ENCODE measurements at regions of chr4 and their contacts with region 1.

Region 1: GRCh38 chr4:85147439-85148076 is 181.1 kb upstream of the WDFY3 start:
- DNase-seq: peak; percentile 50
- ATAC-seq: peak; percentile 53 to 76
- H3K4me3 ChIP-seq: no peak overlapping the region
- H3K27ac ChIP-seq: no peak overlapping the region
- H3K4me1 ChIP-seq: no peaks in the 10 kb centered on the region
- H3K27me3 ChIP-seq: no peaks in the 10 kb centered on the region
- CTCF ChIP-seq: peak; percentile 62

Region 2: DNA sequence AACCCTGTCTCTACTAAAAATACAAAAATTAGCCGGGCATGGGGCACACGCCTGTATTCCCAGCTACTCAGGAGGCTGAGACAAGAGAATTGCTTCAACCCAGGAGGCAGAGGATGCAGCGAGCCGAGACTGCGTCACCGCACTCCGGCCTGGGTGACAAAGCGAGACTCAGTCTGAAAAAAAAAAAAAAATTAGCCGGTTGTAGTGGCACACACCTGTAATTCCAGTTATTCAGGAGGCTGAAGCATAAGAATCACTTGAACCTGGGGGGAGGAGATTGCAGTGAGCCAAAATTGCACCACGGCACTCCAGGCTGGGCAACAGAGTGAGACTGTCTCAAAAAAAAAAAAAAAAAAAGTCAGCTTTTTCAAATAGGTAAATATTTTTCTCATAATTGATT is 252.9 kb before region 1 on chr4:
- intact Hi-C with region 1: no loop called
- DNase-seq: peak; percentile 57
- ATAC-seq: peak; percentile 92 to 93
- H3K4me3 ChIP-seq: no peak overlapping the region
- H3K27ac ChIP-seq: peak overlapping the region; percentile 32
- H3K4me1 ChIP-seq: peaks cover 14% of the 10 kb centered on the region
- H3K27me3 ChIP-seq: no peaks in the 10 kb centered on the region
- CTCF ChIP-seq: no peak

Region 3: GRCh38 chr4:84971319-84971932 is 176.1 kb before region 1 on chr4:
- intact Hi-C with region 1: no loop called
- DNase-seq: no peak
- ATAC-seq: no peak
- H3K4me3 ChIP-seq: no peak overlapping the region
- H3K27ac ChIP-seq: no peak overlapping the region
- H3K4me1 ChIP-seq: peaks cover 14% of the 10 kb centered on the region
- H3K27me3 ChIP-seq: no peaks in the 10 kb centered on the region
- CTCF ChIP-seq: peak; percentile 60

Region 4: GRCh38 chr4:85747882-85748491 is 600.4 kb after region 1 on chr4:
- intact Hi-C with region 1: loop called (anchors 10 kb)
- DNase-seq: no peak
- ATAC-seq: peak; percentile 84 to 89
- H3K4me3 ChIP-seq: no peak overlapping the region
- H3K27ac ChIP-seq: no peak overlapping the region
- H3K4me1 ChIP-seq: peaks cover 14% of the 10 kb centered on the region
- H3K27me3 ChIP-seq: no peaks in the 10 kb centered on the region
- CTCF ChIP-seq: peak; percentile 86